Adrenal gland (tissue), 19 donors: ENCODE measurements at regions of chr7 and their contacts with region 1.

Region 1: DNA sequence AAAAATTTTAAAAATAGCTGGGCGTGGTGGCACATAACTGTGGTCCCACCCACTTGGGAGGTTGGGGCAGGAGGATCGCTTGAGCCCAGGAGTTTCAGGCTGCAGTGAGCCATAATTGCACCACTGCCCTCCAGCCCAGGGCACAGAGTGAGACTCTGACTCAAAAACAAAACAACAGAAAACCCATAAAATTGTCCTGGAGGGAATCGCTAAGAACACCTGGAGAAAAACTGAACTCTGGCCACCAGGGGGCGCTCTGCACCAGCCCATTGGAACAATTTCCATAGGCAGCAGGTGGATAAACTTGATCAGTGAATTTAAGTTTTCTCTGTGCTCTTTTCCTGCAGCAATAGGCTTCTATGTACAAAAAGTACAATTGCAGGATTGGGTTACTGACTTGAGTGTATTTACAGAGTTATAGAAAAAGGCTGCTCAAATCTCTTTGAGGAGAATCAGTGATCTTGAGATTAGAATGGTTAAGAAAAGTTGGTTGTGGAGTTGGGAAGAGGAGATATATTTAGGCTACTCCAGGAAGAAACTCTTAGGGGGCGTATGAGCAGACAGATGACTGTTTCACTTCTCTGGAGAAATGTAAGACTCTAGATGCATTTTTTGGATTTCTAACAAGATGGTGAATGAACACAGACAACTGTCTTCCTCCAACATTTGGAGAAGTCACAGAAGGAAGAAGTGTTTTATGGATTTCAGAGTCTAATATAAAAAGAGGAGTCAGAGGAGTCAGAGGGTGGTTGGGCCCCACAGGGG is 274.9 kb upstream of the GALNT17 start:
- DNase-seq: peak; percentile 63 to 90 (median 75)
- H3K4me3 ChIP-seq: no peak overlapping the region
- H3K27ac ChIP-seq: no peak overlapping the region
- H3K4me1 ChIP-seq: no peaks in the 10 kb centered on the region
- H3K27me3 ChIP-seq: no peaks in the 10 kb centered on the region
- CTCF ChIP-seq: peak; percentile 76 to 99 (median 86)
- POLR2A ChIP-seq: no peak

Region 2: DNA sequence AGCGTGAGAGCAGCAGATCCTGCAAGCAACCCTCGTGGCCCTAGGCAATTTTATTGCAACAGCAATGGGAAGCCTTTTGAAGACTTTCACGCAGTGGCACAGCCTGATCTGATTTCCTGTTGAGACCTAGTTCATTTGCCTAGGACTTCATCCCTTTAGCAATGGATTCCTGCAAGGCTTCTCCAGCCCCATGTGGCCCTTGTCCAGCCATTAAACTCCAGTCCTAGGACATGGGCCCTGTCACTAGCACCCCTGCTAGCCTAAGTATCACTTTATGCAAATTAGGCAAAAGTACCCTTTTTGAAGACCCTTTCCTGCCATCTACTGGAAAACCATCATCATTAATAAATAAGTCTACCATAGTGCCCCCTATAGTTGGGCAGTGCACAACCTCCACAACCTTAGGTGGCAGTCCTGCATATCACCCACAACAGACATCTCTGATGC is 654.3 kb after region 1 on chr7:
- intact Hi-C with region 1: loop called in 1 of 2 experiments (anchors 10 kb)
- DNase-seq: no peak
- H3K4me3 ChIP-seq: no peak overlapping the region
- H3K27ac ChIP-seq: no peak overlapping the region
- H3K4me1 ChIP-seq: no peaks in the 10 kb centered on the region
- H3K27me3 ChIP-seq: no peaks in the 10 kb centered on the region
- CTCF ChIP-seq: peak in 2 of 6 experiments; percentile 6 to 10
- POLR2A ChIP-seq: no peak